ENCODE measurements at regions of chr10 and their contacts with region 1.

Region 1: DNA sequence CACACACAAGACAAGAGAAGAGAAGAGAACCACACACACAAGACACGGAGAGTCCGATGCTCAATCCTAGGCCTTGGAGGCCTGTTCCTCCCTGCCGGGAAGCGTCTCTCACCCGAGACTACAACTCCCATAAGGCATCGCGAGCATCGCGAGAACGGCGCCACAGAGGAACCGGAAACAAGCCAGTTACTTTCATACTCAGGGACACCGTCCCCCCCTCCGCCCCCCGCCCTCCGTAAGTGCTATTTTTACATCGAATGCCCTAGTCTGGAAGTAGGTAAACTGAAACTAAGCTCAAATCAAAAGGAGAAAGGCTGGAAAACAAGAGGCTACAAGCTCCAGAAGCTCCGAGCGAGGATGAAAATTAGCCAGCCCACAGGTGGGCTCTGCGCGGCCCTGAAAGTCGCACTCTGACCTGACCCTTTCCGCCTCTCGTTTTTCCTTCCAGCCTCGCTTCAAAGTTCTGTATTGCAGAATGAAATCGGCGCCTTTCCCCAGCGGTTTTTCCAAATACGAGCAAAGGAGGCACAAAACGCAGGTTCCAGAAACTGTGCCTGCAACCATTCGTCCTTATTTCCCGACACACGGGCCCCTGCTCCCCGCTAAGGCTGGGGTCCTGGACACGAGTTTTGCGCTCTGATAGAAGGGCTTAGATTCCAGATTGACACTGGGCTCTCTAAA is 11.5 kb upstream of the DNAJC12 start:
- DNase-seq: peak; percentile 94
- H3K4me3 Mint-ChIP-seq: peak overlapping the region; percentile 88
- H3K27ac Mint-ChIP-seq: peak overlapping the region; percentile 94
- H3K4me1 Mint-ChIP-seq: no peaks in the 10 kb centered on the region
- H3K27me3 Mint-ChIP-seq: no peaks in the 10 kb centered on the region
- CTCF ChIP-seq: no peak

Region 2: GRCh38 chr10:67837541-67838314 is 11.7 kb before region 1 on chr10 and contains the start of gene DNAJC12:
- CTCF ChIA-PET with region 1: interaction called, 3 read pairs
- POLR2A ChIA-PET with region 1: interaction called, 23 read pairs
- intact Hi-C with region 1: no loop called
- DNase-seq: peak; percentile 69
- H3K4me3 Mint-ChIP-seq: peak within 1 kb of the TSS; percentile 79
- H3K27ac Mint-ChIP-seq: no peak within 1 kb of the TSS
- H3K4me1 Mint-ChIP-seq: peaks cover 6% of the 10 kb centered on the region
- H3K27me3 Mint-ChIP-seq: no peaks in the 10 kb centered on the region
- CTCF ChIP-seq: no peak
- total RNA-seq, gene DNAJC12: 9.5 and 13.8 TPM in 2 replicates

Region 3: DNA sequence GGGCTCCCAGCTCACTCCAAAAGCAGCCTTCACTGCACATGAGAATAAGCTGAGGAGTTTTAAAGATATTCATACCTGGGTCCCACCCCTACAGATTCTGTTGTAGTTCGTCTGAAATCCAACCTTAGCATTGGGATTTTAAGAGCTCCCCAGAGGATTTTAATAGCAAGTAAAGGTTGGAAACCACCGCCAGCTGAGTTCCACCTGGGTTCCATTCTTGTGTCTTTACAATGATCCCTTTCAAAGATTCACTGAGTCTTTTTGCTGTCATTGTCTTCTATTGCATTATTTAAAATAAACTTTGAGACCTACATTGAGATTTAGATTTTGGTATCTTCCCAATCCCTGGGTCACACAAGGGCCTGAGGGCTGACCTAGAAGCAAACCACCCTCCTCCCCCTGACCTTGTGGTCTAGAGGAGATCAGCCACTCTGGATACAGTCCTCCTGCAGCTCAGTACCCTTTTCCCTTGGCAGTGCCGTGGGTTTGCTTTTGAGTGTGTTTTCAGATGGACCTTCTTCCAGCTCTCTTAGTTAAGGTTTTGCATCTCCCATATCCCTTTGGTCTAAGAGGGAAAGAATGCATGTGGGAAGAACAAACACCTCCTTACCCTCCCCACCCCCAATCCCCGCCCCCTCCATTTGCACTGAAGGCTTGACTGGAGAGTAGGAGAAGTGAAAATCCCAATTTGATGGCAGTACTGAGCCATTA is 12.4 kb after region 1 on chr10:
- CTCF ChIA-PET with region 1: interaction called, 10 read pairs
- POLR2A ChIA-PET with region 1: no interaction called
- intact Hi-C with region 1: no loop called
- DNase-seq: no peak
- H3K4me3 Mint-ChIP-seq: no peak overlapping the region
- H3K27ac Mint-ChIP-seq: no peak overlapping the region
- H3K4me1 Mint-ChIP-seq: no peaks in the 10 kb centered on the region
- H3K27me3 Mint-ChIP-seq: no peaks in the 10 kb centered on the region
- CTCF ChIP-seq: no peak

Region 4: DNA sequence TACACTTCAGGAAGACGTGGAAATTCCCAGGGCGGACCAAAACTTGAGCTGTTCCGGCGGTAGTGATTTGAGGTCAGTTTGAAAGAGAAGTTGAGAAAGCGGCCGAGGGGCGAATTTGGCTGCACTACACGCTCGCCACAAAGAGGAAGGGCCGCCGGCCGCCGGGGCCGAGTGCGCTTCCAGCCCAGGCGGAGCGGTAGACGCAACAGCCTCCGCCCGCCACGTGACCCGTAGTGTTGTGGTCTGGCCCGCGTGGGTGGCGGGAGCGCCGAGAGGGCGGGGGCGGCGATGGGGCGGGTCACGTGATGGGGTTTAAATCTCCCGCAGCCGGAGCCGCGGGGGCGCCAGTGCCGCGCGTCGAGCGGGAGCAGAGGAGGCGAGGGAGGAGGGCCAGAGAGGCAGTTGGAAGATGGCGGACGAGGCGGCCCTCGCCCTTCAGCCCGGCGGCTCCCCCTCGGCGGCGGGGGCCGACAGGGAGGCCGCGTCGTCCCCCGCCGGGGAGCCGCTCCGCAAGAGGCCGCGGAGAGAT is 34.9 kb after region 1 on chr10 and contains the start of gene SIRT1:
- CTCF ChIA-PET with region 1: interaction called, 20 read pairs
- POLR2A ChIA-PET with region 1: interaction called, 32 read pairs
- intact Hi-C with region 1: no loop called
- DNase-seq: peak; percentile 93
- H3K4me3 Mint-ChIP-seq: peak within 1 kb of the TSS; percentile 78
- H3K27ac Mint-ChIP-seq: peak within 1 kb of the TSS; percentile 95
- H3K4me1 Mint-ChIP-seq: peaks cover 12% of the 10 kb centered on the region
- H3K27me3 Mint-ChIP-seq: no peaks in the 10 kb centered on the region
- CTCF ChIP-seq: no peak
- total RNA-seq, gene SIRT1: 17.9 and 23.2 TPM in 2 replicates

Region 5: GRCh38 chr10:69045441-69046300 is 1196.2 kb after region 1 on chr10:
- CTCF ChIA-PET with region 1: no interaction called
- POLR2A ChIA-PET with region 1: no interaction called
- intact Hi-C with region 1: no loop called
- DNase-seq: peak; percentile 70
- H3K4me3 Mint-ChIP-seq: no peak overlapping the region
- H3K27ac Mint-ChIP-seq: peak overlapping the region; percentile 94
- H3K4me1 Mint-ChIP-seq: peaks cover 10% of the 10 kb centered on the region
- H3K27me3 Mint-ChIP-seq: no peaks in the 10 kb centered on the region
- CTCF ChIP-seq: no peak